IMR-90 (cell line): ENCODE measurements at regions of chr10 and their contacts with region 1.

Region 1: DNA sequence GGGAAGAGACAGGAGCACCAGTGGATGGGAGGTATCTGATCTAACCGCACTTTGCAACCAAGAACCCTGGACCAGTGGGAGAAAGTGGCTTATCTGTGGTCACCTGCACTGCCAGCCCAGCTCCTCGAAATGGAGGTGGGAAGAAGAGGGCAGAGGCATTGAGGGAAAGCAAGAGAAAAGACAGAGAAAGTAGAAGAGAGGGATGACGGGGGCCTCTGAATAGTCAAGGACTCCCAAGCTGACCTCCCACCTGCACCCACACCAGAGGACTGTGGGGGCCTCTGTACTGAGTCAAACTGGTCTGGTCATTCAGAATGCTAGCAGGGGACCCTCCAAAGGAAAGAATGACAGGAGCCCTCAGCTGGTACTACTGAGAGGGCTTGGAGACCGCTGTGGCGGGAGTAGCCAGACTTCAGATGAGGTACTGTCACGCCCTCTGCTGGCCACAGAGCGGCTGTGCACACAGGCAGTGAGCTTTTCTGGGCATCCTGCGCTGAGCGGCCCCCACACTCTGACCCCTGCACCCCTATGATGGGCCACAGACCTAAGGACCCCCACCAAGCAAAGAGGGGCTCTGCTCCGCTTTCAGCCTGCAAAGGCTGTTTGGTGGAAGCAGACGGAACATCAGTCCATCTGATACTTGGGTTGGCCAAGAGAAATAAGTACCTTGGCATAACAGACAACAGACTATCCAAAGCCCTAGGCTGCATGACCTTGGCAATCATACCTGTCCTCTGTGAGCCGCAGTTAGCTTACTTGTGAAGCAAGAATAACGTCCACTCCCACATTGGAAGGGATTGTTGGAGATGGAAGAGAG is 112.9 kb downstream of the COL13A1 start:
- DNase-seq: peak; percentile 65
- ATAC-seq: peak; percentile 99
- H3K4me3 ChIP-seq: no peak overlapping the region
- H3K27ac ChIP-seq: no peak overlapping the region
- H3K4me1 ChIP-seq: no peaks in the 10 kb centered on the region; the same call in 1 of the 2 replicates
- H3K27me3 ChIP-seq: no peaks in the 10 kb centered on the region
- CTCF ChIP-seq: peak; percentile 92
- POLR2A ChIP-seq: no peak
- RAD21 ChIP-seq: peak; percentile 92

Region 2: DNA sequence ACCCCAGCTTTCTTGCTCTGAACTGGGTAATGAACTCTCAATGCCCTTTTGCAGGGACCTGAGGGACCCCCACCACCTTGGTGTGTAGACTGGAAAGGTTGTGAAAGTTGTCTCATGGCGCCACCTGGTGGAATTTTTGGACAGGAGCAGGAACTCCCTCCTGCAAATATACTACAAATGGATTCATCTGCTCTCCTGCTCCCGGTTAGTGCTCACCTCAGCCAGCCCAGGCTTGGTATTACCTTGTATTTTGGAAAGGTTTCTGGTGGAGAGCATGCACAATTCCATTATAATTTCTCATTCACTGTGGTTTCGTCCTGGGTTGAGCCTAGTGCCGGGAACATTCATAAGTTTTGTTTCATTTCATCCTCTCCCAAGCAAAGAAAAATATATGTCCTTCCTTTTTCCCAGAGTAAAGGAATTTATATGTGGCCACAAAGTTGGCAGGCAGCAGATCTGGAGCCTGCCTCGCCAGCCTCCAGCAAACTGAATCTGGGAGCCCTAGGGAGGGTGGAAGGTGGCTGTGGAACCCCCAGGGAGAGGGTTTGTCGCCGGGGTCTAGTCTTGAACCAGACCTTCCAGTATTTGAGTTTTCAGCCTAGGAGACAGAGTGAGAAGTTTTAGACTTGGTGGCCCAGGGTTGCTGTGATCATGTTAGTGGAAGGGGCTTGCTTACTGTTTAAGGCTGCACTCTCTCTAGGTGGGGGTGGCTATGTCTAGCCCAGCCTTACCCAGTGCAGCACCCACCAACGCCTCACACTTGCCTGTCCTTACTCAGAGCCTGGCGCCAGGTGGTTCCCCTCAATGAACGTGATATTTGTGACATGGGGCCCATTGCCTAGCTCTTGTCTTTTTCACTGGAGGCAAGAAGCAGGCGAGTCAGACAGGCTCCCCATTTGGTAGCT is 275.1 kb before region 1 on chr10:
- CTCF ChIA-PET with region 1: interaction called, 6 read pairs
- POLR2A ChIA-PET with region 1: no interaction called
- dilution Hi-C with region 1: no loop called
- in situ Hi-C with region 1: loop called (anchors 5 kb)
- intact Hi-C with region 1: loop called (anchors 1 kb)
- DNase-seq: peak; percentile 56
- ATAC-seq: peak; percentile 87
- H3K4me3 ChIP-seq: no peak overlapping the region
- H3K27ac ChIP-seq: no peak overlapping the region
- H3K4me1 ChIP-seq: no peaks in the 10 kb centered on the region; the same call in 1 of the 2 replicates
- H3K27me3 ChIP-seq: peaks cover 72% of the 10 kb centered on the region
- CTCF ChIP-seq: peak; percentile 81
- POLR2A ChIP-seq: no peak
- RAD21 ChIP-seq: peak; percentile 78

Region 3: DNA sequence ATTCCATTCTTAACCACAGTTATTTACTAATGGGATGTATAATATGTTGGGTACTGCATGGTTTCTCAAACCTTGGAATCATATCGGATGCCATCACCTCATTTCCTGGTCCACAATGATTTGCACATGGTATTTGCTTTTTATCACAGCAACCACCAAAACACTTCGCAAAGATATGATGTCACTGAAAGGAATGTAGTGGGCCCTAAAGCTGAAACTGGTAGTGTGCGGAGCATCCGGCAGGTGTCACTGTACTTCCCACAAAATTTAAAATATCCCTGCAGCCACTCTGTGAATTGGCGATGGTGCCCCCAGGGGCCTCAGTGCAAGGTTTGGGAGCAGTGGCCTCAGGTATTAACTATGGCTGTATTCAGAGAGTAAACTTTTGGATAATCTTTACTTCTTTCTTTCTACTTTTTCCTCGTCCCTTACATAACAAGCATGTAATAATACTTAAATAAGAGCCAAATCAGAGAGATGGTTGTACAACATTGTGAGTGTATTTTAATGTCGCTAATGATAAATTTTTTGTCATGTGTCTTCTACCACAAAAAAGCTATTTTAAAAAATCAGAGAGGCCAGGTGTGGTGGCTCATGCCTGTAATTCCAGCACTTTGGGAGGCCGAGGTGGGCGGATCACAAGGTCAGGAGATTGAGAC is 218.4 kb before region 1 on chr10:
- CTCF ChIA-PET with region 1: no interaction called
- POLR2A ChIA-PET with region 1: no interaction called
- dilution Hi-C with region 1: no loop called
- in situ Hi-C with region 1: no loop called
- intact Hi-C with region 1: loop called (anchors 1 kb)
- DNase-seq: peak; percentile 91
- ATAC-seq: peak; percentile 96
- H3K4me3 ChIP-seq: no peak overlapping the region
- H3K27ac ChIP-seq: no peak overlapping the region
- H3K4me1 ChIP-seq: no peaks in the 10 kb centered on the region
- H3K27me3 ChIP-seq: peaks cover 7% of the 10 kb centered on the region
- CTCF ChIP-seq: peak; percentile 73
- POLR2A ChIP-seq: no peak
- RAD21 ChIP-seq: peak; percentile 60

Region 4: GRCh38 chr10:69786791-69787190 is 127.8 kb before region 1 on chr10:
- CTCF ChIA-PET with region 1: interaction called, 27 read pairs
- POLR2A ChIA-PET with region 1: no interaction called
- dilution Hi-C with region 1: no loop called
- in situ Hi-C with region 1: no loop called
- intact Hi-C with region 1: loop called (anchors 1 kb)
- DNase-seq: peak; percentile 56
- ATAC-seq: peak; percentile 75
- H3K4me3 ChIP-seq: no peak overlapping the region
- H3K27ac ChIP-seq: no peak overlapping the region
- H3K4me1 ChIP-seq: peaks cover 6% of the 10 kb centered on the region; the same call in 1 of the 2 replicates
- H3K27me3 ChIP-seq: peaks cover 32% of the 10 kb centered on the region
- CTCF ChIP-seq: peak; percentile 65
- POLR2A ChIP-seq: no peak
- RAD21 ChIP-seq: peak; percentile 79

Region 5: GRCh38 chr10:70034232-70034631 is 119.6 kb after region 1 on chr10:
- CTCF ChIA-PET with region 1: no interaction called
- POLR2A ChIA-PET with region 1: no interaction called
- dilution Hi-C with region 1: no loop called
- in situ Hi-C with region 1: no loop called
- intact Hi-C with region 1: no loop called
- DNase-seq: no peak
- ATAC-seq: no peak
- H3K4me3 ChIP-seq: no peak overlapping the region
- H3K27ac ChIP-seq: no peak overlapping the region
- H3K4me1 ChIP-seq: no peaks in the 10 kb centered on the region
- H3K27me3 ChIP-seq: peaks cover 25% of the 10 kb centered on the region
- CTCF ChIP-seq: no peak
- POLR2A ChIP-seq: no peak
- RAD21 ChIP-seq: no peak